Endothelial cell of umbilical vein (primary cell): ENCODE measurements at regions of chr10 and their contacts with region 1.

Region 1: DNA sequence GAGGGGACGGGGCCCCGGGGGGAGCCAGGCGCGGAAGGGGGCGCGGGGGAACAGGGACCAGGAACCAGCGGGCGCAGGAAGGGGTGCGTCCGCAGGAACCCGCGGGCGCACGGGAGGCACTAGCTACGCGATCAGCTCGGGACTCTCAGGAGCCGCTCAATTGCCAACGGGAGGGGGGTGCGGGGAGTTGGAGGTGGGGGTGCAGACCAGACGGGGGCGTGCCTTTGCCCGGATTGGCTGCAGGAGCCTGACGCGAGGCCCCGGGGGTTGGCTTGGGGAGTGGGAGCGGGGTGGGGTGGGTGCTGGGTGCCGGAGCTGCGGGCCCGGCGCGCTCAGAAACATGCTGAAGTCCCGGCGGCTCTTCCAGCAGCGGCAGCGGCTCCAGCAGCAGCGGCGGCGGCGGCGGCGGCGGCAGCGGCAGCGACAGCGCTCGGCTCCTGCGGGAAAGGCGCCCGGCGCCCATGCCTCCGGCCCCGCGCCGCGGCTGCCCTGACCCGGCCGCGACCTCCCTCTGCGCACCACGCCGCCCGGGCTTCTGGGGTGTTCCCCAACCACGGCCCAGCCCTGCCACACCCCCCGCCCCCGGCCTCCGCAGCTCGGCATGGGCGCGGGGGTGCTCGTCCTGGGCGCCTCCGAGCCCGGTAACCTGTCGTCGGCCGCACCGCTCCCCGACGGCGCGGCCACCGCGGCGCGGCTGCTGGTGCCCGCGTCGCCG is at the start of gene ADRB1:
- DNase-seq: peak; percentile 61
- H3K4me3 ChIP-seq: peak within 1 kb of the TSS; percentile 30 to 38 (median 38)
- H3K27ac ChIP-seq: no peak within 1 kb of the TSS
- H3K4me1 ChIP-seq: peaks cover 4% of the 10 kb centered on the region
- H3K27me3 ChIP-seq: peaks cover 9 to 11% of the 10 kb centered on the region in 2 experiments
- CTCF ChIP-seq: no peak
- POLR2A ChIP-seq: no peak
- total RNA-seq, gene ADRB1: 0.97 and 1.8 TPM in 2 replicates

Region 2: DNA sequence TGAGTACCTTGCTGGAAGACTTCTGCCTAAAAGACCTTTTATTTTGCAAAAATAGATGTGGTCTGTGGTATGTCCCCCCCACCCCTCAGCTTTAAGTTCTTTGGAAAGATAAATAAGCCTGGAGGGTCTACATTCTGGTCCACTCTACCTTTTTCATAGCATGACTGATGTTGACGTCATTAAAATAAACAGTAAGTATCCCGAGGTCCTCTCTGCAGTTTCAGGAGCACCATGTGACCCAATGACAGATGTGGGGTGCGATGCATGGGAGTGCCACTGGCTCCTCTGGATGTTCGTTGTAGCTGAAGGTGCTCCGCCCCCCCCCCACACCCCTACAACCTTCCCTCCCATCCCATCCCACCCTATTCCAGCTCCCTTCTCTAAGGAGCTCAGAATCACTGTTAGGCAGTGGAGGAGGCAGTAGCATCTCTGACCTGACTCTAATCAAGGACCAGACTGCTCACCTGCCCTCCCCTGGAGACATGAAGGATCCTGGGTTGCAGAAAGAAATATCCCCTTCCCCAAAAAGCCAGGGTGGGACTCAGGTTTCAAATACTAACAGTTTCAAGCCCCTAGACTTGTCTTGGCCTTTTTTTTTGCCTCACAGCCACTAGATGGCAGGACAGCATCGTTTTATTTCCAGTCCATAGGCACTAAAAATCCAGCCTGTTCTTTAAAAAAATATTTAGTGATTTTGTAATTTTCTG is 338.9 kb before region 1 on chr10:
- CTCF ChIA-PET with region 1: no interaction called
- POLR2A ChIA-PET with region 1: no interaction called
- dilution Hi-C with region 1: no loop called
- intact Hi-C with region 1: loop called (anchors 5 kb)
- DNase-seq: peak; percentile 50
- H3K4me3 ChIP-seq: no peak overlapping the region
- H3K27ac ChIP-seq: no peak overlapping the region
- H3K4me1 ChIP-seq: peaks cover 20% of the 10 kb centered on the region
- H3K27me3 ChIP-seq: no peaks in the 10 kb centered on the region
- CTCF ChIP-seq: peak; percentile 52 to 59
- POLR2A ChIP-seq: no peak

Region 3: DNA sequence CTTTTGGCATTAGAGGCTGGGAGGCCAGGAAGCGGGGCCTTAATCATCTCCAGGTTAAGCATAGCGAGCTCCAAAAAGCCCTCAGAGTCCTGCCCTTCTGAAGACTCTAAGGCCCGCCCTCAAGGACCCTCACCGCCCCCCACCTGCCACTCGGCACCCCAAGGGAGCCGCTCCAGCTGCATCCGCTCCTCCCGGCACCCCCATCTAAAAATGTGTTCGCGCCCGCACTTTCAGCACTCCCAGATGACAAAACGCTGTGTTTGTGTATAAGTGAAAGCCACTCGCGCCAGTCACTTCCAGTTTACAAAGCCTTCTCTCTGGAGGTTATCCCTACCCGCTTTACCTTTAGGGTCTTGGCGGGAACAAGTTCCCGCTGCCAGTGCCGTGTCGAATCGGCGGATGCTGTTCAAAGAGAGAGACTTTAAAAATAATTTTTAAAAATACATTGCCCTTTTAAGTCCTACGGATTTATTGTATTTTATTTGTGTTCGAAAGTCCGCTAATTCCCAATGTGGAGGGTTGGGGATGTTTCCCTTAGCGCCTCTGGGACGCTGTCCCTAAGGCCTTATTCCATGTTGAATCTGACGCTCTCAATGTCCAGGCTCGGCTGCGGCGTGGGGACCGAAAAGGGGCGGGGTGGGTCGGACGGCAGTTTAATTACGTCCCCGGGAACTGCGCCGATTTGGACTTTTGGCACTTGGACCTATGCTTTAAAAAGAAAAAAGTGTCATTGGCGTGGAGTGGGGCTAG is 189.5 kb before region 1 on chr10 and contains the starts of genes DCLRE1A and NHLRC2:
- CTCF ChIA-PET with region 1: no interaction called
- POLR2A ChIA-PET with region 1: no interaction called
- dilution Hi-C with region 1: no loop called
- intact Hi-C with region 1: loop called (anchors 1 kb)
- DNase-seq: peak; percentile 84
- H3K4me3 ChIP-seq: peak within 1 kb of the TSS; percentile 87 to 99 (median 87)
- H3K27ac ChIP-seq: peak within 1 kb of the TSS; percentile 96
- H3K4me1 ChIP-seq: peaks cover 43% of the 10 kb centered on the region
- H3K27me3 ChIP-seq: no peaks in the 10 kb centered on the region
- CTCF ChIP-seq: no peak
- POLR2A ChIP-seq: no peak
- total RNA-seq, gene DCLRE1A: 5.4 and 6.7 TPM in 2 replicates
- total RNA-seq, gene NHLRC2: 28.2 and 34.5 TPM in 2 replicates

Region 4: GRCh38 chr10:113907166-113907565 is 136.5 kb before region 1 on chr10:
- CTCF ChIA-PET with region 1: no interaction called
- POLR2A ChIA-PET with region 1: no interaction called
- dilution Hi-C with region 1: no loop called
- intact Hi-C with region 1: no loop called
- DNase-seq: no peak
- H3K4me3 ChIP-seq: no peak overlapping the region
- H3K27ac ChIP-seq: no peak overlapping the region
- H3K4me1 ChIP-seq: no peaks in the 10 kb centered on the region
- H3K27me3 ChIP-seq: no peaks in the 10 kb centered on the region
- CTCF ChIP-seq: no peak
- POLR2A ChIP-seq: no peak

Region 5: DNA sequence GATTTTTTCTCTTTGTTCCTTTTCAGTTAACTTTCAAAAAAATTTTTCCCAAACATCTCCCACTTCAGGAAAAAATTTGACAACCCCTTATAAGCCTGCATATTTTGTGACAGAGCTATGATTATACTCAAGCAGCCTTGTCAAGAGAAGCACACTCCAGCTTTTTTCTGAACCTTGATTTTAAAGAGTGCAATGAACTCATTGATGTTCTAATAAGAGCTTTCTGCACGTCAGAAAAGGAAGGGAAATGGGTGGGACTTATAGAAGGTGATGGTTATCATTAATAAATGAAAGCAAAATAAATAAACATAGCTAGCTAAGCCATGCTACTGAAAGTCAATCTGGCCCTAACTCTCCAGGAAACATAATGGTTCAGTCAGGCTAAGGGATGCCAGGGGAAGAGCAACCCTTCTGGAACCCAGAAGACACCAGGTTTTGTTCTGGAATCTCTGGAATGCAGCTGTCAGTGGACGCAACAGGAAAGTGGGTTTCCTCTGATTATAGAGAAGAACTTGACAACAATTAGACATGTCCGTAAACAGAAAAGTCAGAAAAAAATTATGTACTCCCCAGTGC is 113.1 kb before region 1 on chr10:
- CTCF ChIA-PET with region 1: no interaction called
- POLR2A ChIA-PET with region 1: no interaction called
- dilution Hi-C with region 1: no loop called
- intact Hi-C with region 1: loop called (anchors 2 kb)
- DNase-seq: peak; percentile 32
- H3K4me3 ChIP-seq: no peak overlapping the region
- H3K27ac ChIP-seq: peak overlapping the region; percentile 68
- H3K4me1 ChIP-seq: peaks cover 22% of the 10 kb centered on the region
- H3K27me3 ChIP-seq: no peaks in the 10 kb centered on the region
- CTCF ChIP-seq: no peak
- POLR2A ChIP-seq: no peak

Region 6: GRCh38 chr10:114024876-114025610 is 18.6 kb before region 1 on chr10:
- CTCF ChIA-PET with region 1: no interaction called
- POLR2A ChIA-PET with region 1: no interaction called
- dilution Hi-C with region 1: no loop called
- intact Hi-C with region 1: loop called (anchors 1 kb)
- DNase-seq: no peak
- H3K4me3 ChIP-seq: no peak overlapping the region
- H3K27ac ChIP-seq: peak overlapping the region; percentile 95
- H3K4me1 ChIP-seq: peaks cover 34% of the 10 kb centered on the region
- H3K27me3 ChIP-seq: no peaks in the 10 kb centered on the region
- CTCF ChIP-seq: no peak
- POLR2A ChIP-seq: no peak

Region 7: DNA sequence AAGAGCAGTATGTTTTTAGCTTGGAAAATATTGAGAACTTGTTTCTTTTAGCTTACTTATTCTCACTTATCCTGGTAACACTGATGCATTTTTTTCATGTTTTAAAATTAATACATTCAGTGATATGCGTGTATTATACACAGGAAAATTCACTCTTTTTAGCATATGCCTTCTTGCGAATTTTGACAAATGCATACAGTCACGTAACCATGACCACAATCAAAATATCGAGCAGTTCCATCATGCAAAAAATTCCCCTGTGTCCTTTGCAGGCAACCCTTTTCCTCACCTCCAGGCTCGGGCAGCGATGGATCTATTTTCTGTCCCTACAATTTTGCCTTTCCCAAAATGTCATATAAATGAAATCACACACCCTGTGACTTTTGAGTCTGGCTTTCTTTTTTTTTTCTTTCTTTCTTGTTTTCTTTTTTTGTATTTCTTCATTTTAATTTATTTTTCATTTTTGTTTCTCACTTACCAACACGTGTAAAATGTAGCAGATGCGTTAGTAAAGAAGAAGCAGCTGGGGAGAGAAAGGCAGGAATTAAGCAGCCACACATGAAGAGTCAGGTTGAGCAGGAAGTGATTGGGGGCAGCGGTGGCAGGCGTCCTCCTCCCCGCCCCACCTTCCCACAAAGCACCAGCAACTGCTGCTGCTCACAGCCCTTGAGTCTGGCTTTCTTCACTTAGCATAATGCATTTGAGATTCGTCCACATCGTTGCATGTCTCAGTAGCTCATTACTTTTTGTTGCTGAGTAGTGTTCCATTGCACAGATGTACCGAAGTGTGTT is 29.9 kb after region 1 on chr10:
- CTCF ChIA-PET with region 1: interaction called, 6 read pairs
- POLR2A ChIA-PET with region 1: no interaction called
- dilution Hi-C with region 1: no loop called
- intact Hi-C with region 1: loop called (anchors 1 kb)
- DNase-seq: no peak
- H3K4me3 ChIP-seq: no peak overlapping the region
- H3K27ac ChIP-seq: no peak overlapping the region
- H3K4me1 ChIP-seq: no peaks in the 10 kb centered on the region
- H3K27me3 ChIP-seq: no peaks in the 10 kb centered on the region
- CTCF ChIP-seq: no peak
- POLR2A ChIP-seq: no peak